ENCODE measurements at regions of chr4 and their contacts with region 1.

Region 1: DNA sequence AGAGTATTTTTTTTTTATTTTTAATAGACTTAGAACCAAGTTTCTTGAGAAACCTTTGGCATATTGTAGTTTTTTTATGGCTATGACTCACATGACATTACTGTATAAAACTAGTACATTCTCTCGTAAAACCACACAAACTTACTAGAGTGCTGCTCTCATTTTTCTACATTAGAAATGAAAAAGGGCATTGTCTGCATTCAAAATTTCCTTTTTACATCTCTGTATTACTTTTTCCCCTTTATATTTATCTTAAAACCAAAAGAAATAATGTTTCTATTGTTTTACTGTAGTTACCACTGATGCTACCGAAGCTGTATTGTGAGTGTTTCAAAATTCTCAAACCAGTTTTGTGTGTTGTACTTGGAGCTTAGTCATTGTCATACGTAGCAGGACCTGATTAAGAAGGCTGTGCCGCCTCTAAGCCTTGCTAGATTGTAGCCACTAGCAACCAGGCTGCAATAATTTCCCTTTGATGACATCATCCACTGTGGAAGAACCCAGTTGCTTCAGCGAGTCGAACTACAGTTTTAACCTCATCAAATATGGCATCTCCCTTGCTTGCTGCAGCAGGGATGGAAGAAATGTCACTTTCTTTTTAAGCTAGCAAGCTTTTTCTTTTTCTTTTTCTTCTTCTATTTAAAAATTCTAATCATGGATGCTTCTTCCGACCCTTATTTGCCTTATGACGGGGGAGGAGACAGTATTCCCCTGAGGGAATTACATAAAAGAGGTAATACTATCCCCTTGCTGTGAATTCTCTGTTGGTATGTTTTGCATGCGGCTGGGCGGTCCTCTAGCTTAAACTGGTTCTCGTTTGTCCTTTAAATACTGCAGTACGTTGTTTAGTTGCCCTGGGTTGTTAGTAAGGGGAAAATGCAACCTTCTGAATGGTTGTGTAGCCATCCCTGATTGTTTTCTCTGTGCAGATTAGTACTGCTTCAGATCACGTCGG is 39.6 kb downstream of the CLCN3 start:
- DNase-seq: peak; percentile 87
- H3K4me3 Mint-ChIP-seq: peak overlapping the region; percentile 89
- H3K27ac Mint-ChIP-seq: peak overlapping the region; percentile 95
- H3K4me1 Mint-ChIP-seq: peaks cover 30% of the 10 kb centered on the region
- H3K27me3 Mint-ChIP-seq: no peaks in the 10 kb centered on the region

Region 2: DNA sequence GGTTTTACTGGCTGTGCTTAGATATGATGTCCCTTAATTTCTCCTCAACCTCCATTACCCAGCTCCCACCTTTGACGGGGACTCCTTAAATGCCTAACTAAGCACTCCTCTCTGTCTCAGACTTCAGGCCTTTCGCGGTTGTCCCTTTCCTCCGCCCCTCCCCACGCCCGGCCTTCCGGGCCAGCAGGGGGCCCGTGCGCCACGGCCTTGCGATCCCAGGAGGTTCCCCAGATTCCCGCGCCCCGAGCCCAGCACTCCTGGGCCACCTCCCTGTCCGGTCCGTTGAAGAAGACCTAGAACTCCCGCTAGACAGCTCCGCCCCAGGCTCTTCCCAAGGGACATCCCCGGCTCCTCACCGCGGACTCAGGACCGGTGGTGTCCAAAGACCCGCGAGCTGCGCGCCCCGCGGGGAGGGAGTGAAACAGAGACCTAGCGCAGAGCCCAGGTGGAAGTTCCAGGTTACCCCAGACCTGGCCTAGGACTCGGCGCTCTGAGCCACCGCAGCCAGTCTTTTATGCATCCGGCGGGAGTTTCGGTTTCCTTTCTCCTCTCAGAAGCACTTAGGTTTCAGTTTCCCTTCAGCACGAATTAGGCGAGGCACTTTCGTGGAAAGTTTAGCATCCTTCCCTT is 1341.6 kb before region 1 on chr4 and contains the start of gene DDX60:
- CTCF ChIA-PET with region 1: no interaction called
- intact Hi-C with region 1: loop called (anchors 5 kb)
- DNase-seq: peak; percentile 90
- H3K4me3 Mint-ChIP-seq: peak within 1 kb of the TSS; percentile 85
- H3K27ac Mint-ChIP-seq: peak within 1 kb of the TSS; percentile 89
- H3K4me1 Mint-ChIP-seq: peaks cover 31% of the 10 kb centered on the region
- H3K27me3 Mint-ChIP-seq: no peaks in the 10 kb centered on the region
- total RNA-seq, gene DDX60: 26.8 to 28.2 TPM

Region 3: GRCh38 chr4:169566021-169566818 is 93.8 kb before region 1 on chr4:
- CTCF ChIA-PET with region 1: interaction called, 10 read pairs
- intact Hi-C with region 1: no loop called
- DNase-seq: peak; percentile 47
- H3K4me3 Mint-ChIP-seq: no peak overlapping the region
- H3K27ac Mint-ChIP-seq: no peak overlapping the region
- H3K4me1 Mint-ChIP-seq: peaks cover 7% of the 10 kb centered on the region
- H3K27me3 Mint-ChIP-seq: no peaks in the 10 kb centered on the region

Region 4: GRCh38 chr4:169619959-169620879 is 39.8 kb before region 1 on chr4 and contains the start of gene CLCN3:
- CTCF ChIA-PET with region 1: interaction called, 18 read pairs
- intact Hi-C with region 1: loop called (anchors 1 kb)
- DNase-seq: peak; percentile 90
- H3K4me3 Mint-ChIP-seq: peak within 1 kb of the TSS; percentile 93
- H3K27ac Mint-ChIP-seq: peak within 1 kb of the TSS; percentile 96
- H3K4me1 Mint-ChIP-seq: peaks cover 59% of the 10 kb centered on the region
- H3K27me3 Mint-ChIP-seq: no peaks in the 10 kb centered on the region
- total RNA-seq, gene CLCN3: 17.4 to 18.4 TPM

Region 5: DNA sequence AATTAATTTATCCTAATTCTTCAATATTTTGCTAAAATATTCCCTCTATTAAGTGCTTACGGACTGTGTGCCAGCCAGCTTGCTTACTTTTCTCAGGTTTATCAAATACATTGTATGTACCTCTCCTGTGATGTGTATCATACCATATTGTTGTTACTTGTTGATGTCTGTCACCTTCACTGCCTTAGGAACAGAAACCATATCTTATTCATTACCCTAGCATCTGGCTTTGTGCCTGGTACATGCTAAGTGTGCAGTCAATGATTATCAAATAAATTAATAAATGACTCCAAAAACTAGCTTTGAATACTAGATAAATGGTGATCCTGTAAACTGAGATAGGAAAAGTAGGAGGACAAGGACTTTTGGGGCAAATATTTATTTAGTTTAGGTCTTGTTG is 32.7 kb before region 1 on chr4:
- CTCF ChIA-PET with region 1: no interaction called
- intact Hi-C with region 1: loop called (anchors 1 kb)
- DNase-seq: no peak
- H3K4me3 Mint-ChIP-seq: no peak overlapping the region
- H3K27ac Mint-ChIP-seq: no peak overlapping the region
- H3K4me1 Mint-ChIP-seq: peaks cover 41% of the 10 kb centered on the region
- H3K27me3 Mint-ChIP-seq: no peaks in the 10 kb centered on the region

Region 6: GRCh38 chr4:169757575-169758184 is 97.7 kb after region 1 on chr4 and contains the start of gene HPF1:
- CTCF ChIA-PET with region 1: interaction called, 6 read pairs
- intact Hi-C with region 1: loop called (anchors 1 kb)
- DNase-seq: peak; percentile 97
- H3K4me3 Mint-ChIP-seq: peak within 1 kb of the TSS; percentile 83
- H3K27ac Mint-ChIP-seq: peak within 1 kb of the TSS; percentile 81
- H3K4me1 Mint-ChIP-seq: peaks cover 21% of the 10 kb centered on the region
- H3K27me3 Mint-ChIP-seq: no peaks in the 10 kb centered on the region
- total RNA-seq, gene HPF1: 35.7 to 36.6 TPM

Region 7: DNA sequence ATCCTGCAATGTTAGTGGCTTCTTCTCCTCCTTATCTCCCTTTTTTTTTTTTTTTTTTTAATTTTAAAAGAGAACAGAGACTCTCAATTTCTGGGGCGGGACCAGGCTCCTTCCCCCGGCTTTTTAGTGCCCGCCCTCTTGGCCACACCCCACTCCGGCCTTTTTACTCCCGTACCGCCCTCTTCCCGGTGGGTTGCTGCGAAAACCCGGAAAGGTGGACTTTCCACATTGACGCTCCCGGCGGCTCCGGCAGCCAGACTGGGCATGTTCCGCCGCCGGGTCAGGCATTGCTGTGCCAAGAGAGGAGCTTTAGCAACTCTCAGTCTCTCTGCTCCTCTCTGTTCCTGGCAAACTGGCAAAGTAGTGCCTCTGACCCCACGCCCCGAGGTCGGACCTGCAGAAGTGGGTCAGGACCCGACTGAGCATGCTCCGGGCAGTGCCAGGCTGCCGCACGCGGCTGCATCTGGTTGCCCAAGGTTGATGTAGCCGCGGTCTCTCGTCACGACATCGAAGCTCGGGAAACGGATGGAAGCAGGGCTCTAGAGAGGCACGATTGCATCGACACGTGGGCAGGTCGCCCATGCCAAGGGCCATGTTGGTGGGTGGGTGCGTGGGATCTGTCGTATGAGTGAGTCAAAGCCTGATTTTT is 367.3 kb after region 1 on chr4:
- CTCF ChIA-PET with region 1: no interaction called
- intact Hi-C with region 1: loop called (anchors 1 kb)
- DNase-seq: peak; percentile 93
- H3K4me3 Mint-ChIP-seq: peak overlapping the region; percentile 83
- H3K27ac Mint-ChIP-seq: peak overlapping the region; percentile 38
- H3K4me1 Mint-ChIP-seq: peaks cover 7% of the 10 kb centered on the region
- H3K27me3 Mint-ChIP-seq: peaks cover 15% of the 10 kb centered on the region

Measured in activated naive CD4-positive, alpha-beta T cell treated with anti-CD3 and anti-CD28 coated beads for 36 hours (primary cell).